ENCODE measurements at regions of chr16 and their contacts with region 1.

Region 1: DNA sequence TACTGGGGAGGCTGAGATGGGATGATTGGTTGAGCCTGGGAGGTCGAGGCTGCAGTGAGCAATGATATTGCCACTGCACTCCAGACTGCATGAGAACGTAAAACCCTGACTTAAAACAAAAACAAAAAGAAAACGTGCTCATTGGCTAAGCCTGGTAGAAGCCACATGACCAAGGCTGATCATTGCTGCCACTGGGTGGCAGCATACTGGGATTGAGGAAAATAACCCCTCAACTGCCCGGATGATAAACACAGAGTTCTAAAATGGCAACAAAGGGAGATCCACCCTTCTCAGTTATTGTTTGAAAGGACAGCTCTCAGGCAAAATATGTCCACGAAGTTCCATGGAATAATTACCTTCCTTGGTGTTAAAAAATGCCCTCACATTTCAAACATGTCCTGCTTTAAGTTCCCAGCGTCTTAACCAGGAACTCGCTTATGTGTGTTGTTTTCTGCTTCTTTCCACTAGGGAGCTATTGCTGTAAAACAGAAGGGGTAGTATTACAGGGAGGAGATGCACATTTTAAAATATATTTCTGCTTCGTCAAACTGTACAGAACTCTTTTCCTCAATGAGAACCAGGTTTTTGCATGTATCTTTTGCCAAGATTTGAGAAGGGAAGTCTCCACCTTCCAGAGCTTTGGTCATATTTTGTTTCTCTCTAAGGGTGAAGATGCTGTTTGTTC is 675.3 kb downstream of the MAF start:
- DNase-seq: peak in 1 of 5 donors; percentile 45
- H3K4me3 ChIP-seq: no peak overlapping the region
- H3K27ac ChIP-seq: no peak overlapping the region
- H3K4me1 ChIP-seq: peaks cover 3% of the 10 kb centered on the region
- H3K27me3 ChIP-seq: no peaks in the 10 kb centered on the region
- CTCF ChIP-seq: no peak
- EP300 ChIP-seq: no peak
- POLR2A ChIP-seq: no peak

Region 2: GRCh38 chr16:79001156-79001967 is 76.1 kb after region 1 on chr16:
- intact Hi-C with region 1: no loop called
- DNase-seq: no peak
- H3K4me3 ChIP-seq: no peak overlapping the region
- H3K27ac ChIP-seq: no peak overlapping the region
- H3K4me1 ChIP-seq: no peaks in the 10 kb centered on the region
- H3K27me3 ChIP-seq: no peaks in the 10 kb centered on the region
- CTCF ChIP-seq: no peak
- EP300 ChIP-seq: no peak
- POLR2A ChIP-seq: no peak

Region 3: DNA sequence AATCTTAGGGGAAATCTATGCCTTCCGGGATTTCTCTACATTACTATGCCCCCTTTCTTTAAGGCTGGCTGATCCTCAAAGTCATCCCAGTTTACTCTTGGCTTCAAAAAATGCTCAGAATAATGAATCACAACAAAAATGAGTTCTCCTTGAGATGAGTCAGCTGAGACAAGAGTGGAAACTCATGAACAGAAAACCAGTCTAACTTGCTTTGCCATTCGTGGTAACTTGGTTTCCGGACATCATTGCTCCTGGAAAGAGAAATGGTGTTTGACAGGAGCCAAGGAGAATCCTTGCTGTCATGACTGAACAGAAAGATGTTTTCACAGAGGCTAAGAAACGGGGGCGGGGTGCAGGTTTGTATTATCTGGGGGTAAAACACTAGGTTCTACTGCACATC is 1179.9 kb after region 1 on chr16:
- intact Hi-C with region 1: loop called in 1 of 4 experiments (anchors 10 kb)
- DNase-seq: no peak
- H3K4me3 ChIP-seq: no peak overlapping the region
- H3K27ac ChIP-seq: no peak overlapping the region
- H3K4me1 ChIP-seq: no peaks in the 10 kb centered on the region
- H3K27me3 ChIP-seq: no peaks in the 10 kb centered on the region
- CTCF ChIP-seq: no peak
- EP300 ChIP-seq: no peak
- POLR2A ChIP-seq: no peak

Measured in ovary (tissue), 10 donors.